Ascending aorta (tissue), 2 donors: ENCODE measurements at regions of chr9 and their contacts with region 1.

Region 1: DNA sequence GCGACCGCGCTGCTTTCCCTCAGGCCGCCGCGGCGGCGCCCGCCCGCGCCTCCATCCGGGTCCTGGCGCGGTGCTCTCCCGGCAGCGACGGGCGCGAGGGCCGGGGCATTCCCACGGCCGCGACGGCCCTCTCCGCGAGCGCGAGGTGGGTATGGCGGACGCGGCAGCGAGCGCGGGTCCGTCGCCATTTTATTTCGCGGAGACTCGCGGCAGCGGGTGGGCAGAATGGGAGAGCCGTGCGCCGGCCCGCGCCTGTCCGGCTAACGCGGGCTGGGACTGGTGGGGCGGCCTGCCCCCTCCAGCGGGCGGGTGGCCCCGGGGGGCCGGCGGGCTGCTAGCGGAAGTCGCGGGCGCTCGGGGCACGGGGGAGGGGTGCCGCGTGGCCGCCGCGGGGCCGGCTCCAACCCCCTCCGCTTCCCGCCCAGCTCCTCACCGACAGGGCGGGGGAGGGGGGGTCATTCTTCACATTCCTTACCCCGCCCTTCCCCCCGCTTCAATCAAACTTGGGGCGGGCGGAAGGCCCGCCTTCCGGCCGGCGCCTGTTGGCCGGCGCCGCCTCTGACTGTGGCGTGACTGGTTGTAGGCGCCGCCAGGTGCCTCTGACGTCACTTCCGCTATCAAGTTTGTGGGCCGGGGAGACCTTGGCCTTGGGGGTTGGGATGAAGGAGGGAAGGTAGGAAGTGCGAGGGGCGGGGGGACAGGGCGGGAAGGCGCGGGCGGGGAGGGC is 82.1 kb downstream of the PTPDC1 start:
- DNase-seq: peak; percentile 94 to 99
- H3K4me3 ChIP-seq: peak overlapping the region; percentile 87 to 99
- H3K27ac ChIP-seq: peak overlapping the region; percentile 100
- H3K4me1 ChIP-seq: peaks cover 0 to 31% of the 10 kb centered on the region in 2 donors
- H3K27me3 ChIP-seq: no peaks in the 10 kb centered on the region
- CTCF ChIP-seq: peak in 1 of 3 experiments; percentile 47

Region 2: GRCh38 chr9:93575796-93576257 is 590.6 kb before region 1 on chr9:
- intact Hi-C with region 1: loop called (anchors 2 kb)
- DNase-seq: no peak
- H3K4me3 ChIP-seq: peak overlapping the region; percentile 81 to 98
- H3K27ac ChIP-seq: peak overlapping the region; percentile 95 to 97
- H3K4me1 ChIP-seq: peaks cover 6 to 31% of the 10 kb centered on the region in 2 donors
- H3K27me3 ChIP-seq: no peaks in the 10 kb centered on the region
- CTCF ChIP-seq: no peak

Region 3: DNA sequence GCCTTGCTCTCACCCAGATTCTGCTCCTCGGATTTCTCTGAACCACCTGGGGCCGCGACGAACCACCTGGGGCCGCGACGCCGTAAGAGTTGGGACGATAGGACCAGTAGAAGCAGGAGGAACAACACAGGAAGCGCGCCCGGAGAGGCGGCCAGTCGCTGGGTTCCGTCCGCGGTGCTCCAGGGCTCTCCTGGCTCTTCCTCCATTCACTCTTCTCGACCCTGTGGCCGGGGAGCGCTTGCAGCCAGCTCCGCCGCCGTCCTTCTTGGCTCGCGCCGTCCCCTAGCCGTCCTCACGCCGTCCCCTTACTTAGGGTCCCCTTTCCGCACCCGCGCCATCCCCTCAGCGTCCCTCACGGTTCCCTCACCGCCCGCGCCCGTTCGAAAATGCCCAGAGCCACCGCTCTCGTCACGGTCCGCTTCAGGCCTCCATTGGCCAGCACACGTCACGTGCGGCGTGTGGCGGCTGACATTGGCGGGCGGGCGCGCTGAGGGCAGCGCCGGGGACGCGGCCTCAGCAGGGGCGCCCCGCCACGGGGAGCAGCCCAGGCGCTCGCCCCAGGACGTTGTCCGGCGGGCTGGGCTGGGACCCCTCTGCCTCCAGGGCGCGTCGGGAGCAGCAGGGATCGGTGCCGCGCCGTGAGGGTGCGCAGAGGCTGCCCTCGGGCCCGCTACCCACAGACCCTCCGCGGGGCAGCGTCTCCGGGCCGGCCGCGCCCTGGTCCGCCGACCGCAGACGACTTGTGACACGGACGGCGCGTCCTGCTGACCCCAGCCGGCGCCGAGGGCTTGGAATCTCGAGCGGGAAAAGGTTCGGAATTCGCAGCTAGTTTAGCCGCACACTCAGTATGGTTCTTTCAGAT is 135.9 kb before region 1 on chr9:
- intact Hi-C with region 1: loop called (anchors 1 kb)
- DNase-seq: peak; percentile 37 to 92
- H3K4me3 ChIP-seq: peak overlapping the region; percentile 94 to 95
- H3K27ac ChIP-seq: peak overlapping the region; percentile 79 to 82
- H3K4me1 ChIP-seq: peaks cover 0 to 8% of the 10 kb centered on the region in 2 donors
- H3K27me3 ChIP-seq: no peaks in the 10 kb centered on the region
- CTCF ChIP-seq: no peak

Region 4: DNA sequence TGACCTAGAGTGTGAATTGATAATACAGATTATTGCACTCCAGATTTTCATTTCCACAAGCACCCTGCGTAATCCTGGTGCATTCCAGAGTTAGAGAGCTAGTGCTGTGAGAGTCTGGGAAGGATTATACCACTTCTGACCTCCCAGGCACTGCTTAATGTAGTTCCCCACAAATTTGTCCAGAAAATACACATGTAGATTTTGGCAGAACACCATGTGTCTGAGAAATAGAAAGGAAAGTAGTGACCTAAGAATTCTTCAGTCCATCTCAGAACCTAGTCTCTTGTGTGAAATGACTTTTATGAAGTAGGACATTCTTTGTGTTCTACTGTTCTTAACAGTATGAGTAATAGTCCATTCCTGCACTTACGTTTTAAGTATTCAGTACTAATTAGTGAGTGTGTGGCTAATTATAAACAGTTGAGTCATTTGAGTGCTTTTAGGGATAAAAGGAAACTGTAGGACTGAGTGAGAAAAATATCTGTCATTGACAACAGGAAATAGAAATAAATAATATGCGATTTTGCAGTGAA is 109.9 kb before region 1 on chr9:
- intact Hi-C with region 1: loop called (anchors 2 kb)
- DNase-seq: no peak
- H3K4me3 ChIP-seq: peak overlapping the region in 1 of 2 donors; percentile 7
- H3K27ac ChIP-seq: peak overlapping the region; percentile 59 to 61
- H3K4me1 ChIP-seq: peaks cover 0 to 6% of the 10 kb centered on the region in 2 donors
- H3K27me3 ChIP-seq: no peaks in the 10 kb centered on the region
- CTCF ChIP-seq: no peak

Region 5: GRCh38 chr9:94108584-94108983 is 57.8 kb before region 1 on chr9:
- intact Hi-C with region 1: loop called (anchors 2 kb)
- DNase-seq: peak in 1 of 2 donors; percentile 77
- H3K4me3 ChIP-seq: no peak overlapping the region
- H3K27ac ChIP-seq: peak overlapping the region; percentile 51 to 68
- H3K4me1 ChIP-seq: peaks cover 0 to 18% of the 10 kb centered on the region in 2 donors
- H3K27me3 ChIP-seq: no peaks in the 10 kb centered on the region
- CTCF ChIP-seq: no peak

Region 6: GRCh38 chr9:94139672-94140417 is 26.6 kb before region 1 on chr9:
- intact Hi-C with region 1: loop called (anchors 1 kb)
- DNase-seq: peak; percentile 65 to 95
- H3K4me3 ChIP-seq: peak overlapping the region; percentile 9 to 47
- H3K27ac ChIP-seq: peak overlapping the region; percentile 95
- H3K4me1 ChIP-seq: peaks cover 24 to 71% of the 10 kb centered on the region in 2 donors
- H3K27me3 ChIP-seq: no peaks in the 10 kb centered on the region
- CTCF ChIP-seq: no peak

Region 7: DNA sequence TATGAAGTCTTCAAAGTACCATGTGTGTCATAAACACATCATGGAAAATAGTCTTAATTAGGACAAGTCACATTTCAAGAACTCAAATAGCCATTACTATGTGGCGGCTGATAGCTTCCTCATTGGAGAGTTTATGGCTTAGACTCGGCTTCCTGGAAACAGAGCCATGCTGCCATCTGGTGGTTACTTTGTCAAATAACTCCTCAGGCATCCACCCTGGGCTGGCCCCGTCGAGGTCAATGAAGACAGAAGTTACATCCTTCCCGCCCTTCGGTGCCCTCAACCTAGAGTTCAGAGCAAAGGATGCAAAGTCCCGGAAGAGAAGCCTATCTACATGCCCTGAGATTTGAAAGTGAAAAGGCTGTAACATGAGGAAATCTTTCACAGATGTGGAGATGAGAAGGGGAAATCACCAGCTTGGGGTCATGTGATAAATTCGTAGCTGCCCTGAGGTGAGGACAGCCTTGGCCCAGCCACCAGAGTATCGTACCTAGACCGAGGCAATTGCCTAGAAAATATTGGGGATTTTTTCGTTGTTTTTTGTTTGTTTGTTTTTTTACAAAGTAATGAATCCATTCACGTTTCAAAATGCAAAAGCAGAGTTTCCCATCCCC is 47.2 kb after region 1 on chr9:
- intact Hi-C with region 1: loop called (anchors 5 kb)
- DNase-seq: peak; percentile 17 to 81
- H3K4me3 ChIP-seq: no peak overlapping the region
- H3K27ac ChIP-seq: no peak overlapping the region
- H3K4me1 ChIP-seq: peaks cover 0 to 3% of the 10 kb centered on the region in 2 donors
- H3K27me3 ChIP-seq: no peaks in the 10 kb centered on the region
- CTCF ChIP-seq: peak; percentile 79 to 87 (median 82)